B cell (primary cell): ENCODE measurements at regions of chr18 and their contacts with region 1.

Region 1: GRCh38 chr18:12657684-12658425 is at the start of gene SPIRE1:
- DNase-seq: peak; percentile 71
- ATAC-seq: peak; percentile 77
- H3K4me3 ChIP-seq: peak within 1 kb of the TSS in 4 of 5 experiments; percentile 32 to 67 (median 58)
- H3K4me3 Mint-ChIP-seq: peak within 1 kb of the TSS; percentile 94
- H3K27ac ChIP-seq: no peak within 1 kb of the TSS
- H3K27ac Mint-ChIP-seq: no peak within 1 kb of the TSS
- H3K4me1 ChIP-seq: peaks cover 9 to 11% of the 10 kb centered on the region in 2 donors
- H3K4me1 Mint-ChIP-seq: peaks cover 11% of the 10 kb centered on the region
- H3K27me3 ChIP-seq: peaks cover 0 to 34% (median 5%) of the 10 kb centered on the region in 4 experiments
- H3K27me3 Mint-ChIP-seq: peaks cover 26% of the 10 kb centered on the region
- CTCF ChIP-seq: no peak
- total RNA-seq, gene SPIRE1: 3.0 and 4.0 TPM in 2 replicates

Region 2: DNA sequence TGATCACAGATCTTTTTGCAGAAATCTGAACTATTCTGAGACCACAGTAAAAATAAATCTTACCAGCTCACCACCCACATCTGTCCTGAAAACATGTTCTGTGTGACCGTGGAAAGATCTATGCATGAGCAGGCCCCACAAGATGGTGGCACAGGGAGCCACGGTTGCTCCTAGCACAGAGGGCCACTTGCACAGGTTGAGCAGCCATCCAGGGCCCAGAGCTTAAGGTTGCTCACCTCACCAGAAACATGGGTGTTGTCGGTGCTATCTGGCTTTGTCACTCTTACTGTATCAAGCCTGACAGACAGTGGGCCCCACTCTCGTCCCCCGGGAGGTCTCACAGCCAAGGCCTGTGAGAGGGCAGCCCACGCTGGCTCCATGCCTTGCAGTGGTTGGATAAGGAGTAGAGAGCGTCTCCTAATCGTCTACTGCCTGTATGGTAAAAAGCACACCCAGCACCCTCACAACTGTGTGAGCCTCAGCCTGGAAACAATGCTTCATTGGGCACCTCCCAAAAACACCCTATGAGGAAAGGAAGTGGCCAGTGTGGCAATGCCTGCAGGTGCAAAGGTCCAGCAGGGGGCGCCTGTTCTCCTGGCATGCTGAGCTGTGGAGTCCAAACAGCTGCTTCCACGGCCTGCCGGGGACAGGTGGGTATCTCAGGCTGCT is 330.2 kb before region 1 on chr18:
- CTCF ChIA-PET with region 1: interaction called, 4 read pairs
- POLR2A ChIA-PET with region 1: no interaction called
- intact Hi-C with region 1: loop called (anchors 5 kb)
- DNase-seq: peak; percentile 65
- ATAC-seq: peak; percentile 73
- H3K4me3 ChIP-seq: no peak overlapping the region
- H3K4me3 Mint-ChIP-seq: no peak overlapping the region
- H3K27ac ChIP-seq: no peak overlapping the region
- H3K27ac Mint-ChIP-seq: peak overlapping the region; percentile 10
- H3K4me1 ChIP-seq: peaks cover 7 to 8% of the 10 kb centered on the region in 2 donors
- H3K4me1 Mint-ChIP-seq: peaks cover 14% of the 10 kb centered on the region
- H3K27me3 ChIP-seq: no peaks in the 10 kb centered on the region
- H3K27me3 Mint-ChIP-seq: no peaks in the 10 kb centered on the region
- CTCF ChIP-seq: peak; percentile 79

Region 3: GRCh38 chr18:12391618-12392165 is 266.2 kb before region 1 on chr18:
- CTCF ChIA-PET with region 1: interaction called, 111 read pairs
- POLR2A ChIA-PET with region 1: no interaction called
- intact Hi-C with region 1: loop called (anchors 1 kb)
- DNase-seq: peak; percentile 68
- ATAC-seq: peak; percentile 94
- H3K4me3 ChIP-seq: no peak overlapping the region
- H3K4me3 Mint-ChIP-seq: no peak overlapping the region
- H3K27ac ChIP-seq: no peak overlapping the region
- H3K27ac Mint-ChIP-seq: no peak overlapping the region
- H3K4me1 ChIP-seq: no peaks in the 10 kb centered on the region
- H3K4me1 Mint-ChIP-seq: no peaks in the 10 kb centered on the region
- H3K27me3 ChIP-seq: peaks cover 0 to 7% (median 0%) of the 10 kb centered on the region in 4 experiments
- H3K27me3 Mint-ChIP-seq: peaks cover 9% of the 10 kb centered on the region
- CTCF ChIP-seq: peak; percentile 84